Activated CD8-positive, alpha-beta memory T cell treated with anti-CD3 and anti-CD28 coated beads, Interleukin-2, amount 10 ng/mL, durations not matched to agents 7 days and 5 days (primary cell): ENCODE measurements at regions of chr3 and their contacts with region 1.

Region 1: DNA sequence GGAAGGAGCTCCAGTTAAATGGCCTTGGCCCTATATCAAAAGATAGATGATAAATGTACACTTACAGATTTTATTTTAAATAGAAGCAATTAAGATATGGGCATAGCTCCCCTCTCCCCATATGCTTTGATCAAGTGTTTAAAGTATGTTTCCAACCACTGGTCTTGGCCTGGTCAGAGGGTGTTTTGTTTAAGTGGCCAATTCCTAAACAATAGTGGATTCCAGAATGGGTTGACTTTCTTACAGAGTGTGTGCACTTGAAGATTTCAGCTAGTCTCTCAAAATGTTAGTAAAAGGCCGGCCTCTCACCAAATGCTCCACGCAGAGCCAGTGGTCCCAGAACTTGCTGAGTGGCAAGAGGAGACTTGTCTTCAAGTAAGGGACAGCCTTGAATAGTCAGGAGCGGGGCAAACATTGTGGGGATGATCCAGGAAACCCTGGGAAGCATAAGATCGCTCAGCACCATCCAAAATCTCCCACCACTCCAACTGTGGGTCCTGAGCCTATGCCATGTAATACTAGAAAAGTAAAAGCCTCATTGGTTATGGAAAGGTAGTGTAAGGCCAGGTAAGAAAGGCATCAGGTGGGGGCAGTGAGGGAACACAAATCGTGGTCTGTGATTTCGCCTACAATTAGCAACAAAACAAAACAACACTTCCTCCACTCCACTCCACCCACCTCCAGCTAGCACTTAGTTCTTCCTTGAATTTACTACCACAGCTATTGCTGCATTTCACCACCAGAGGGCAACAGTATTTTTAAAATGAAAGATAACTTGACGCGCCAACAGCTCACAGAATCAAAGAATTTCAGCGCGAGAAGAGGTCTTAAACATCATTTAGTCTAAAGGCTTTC is 4.8 kb downstream of the RARRES1 start:
- DNase-seq: peak; percentile 65
- ATAC-seq: peak; percentile 62
- H3K4me3 Mint-ChIP-seq: no peak overlapping the region
- H3K27ac Mint-ChIP-seq: no peak overlapping the region
- H3K4me1 Mint-ChIP-seq: peaks cover 20% of the 10 kb centered on the region
- H3K27me3 Mint-ChIP-seq: peaks cover 2% of the 10 kb centered on the region

Region 2: DNA sequence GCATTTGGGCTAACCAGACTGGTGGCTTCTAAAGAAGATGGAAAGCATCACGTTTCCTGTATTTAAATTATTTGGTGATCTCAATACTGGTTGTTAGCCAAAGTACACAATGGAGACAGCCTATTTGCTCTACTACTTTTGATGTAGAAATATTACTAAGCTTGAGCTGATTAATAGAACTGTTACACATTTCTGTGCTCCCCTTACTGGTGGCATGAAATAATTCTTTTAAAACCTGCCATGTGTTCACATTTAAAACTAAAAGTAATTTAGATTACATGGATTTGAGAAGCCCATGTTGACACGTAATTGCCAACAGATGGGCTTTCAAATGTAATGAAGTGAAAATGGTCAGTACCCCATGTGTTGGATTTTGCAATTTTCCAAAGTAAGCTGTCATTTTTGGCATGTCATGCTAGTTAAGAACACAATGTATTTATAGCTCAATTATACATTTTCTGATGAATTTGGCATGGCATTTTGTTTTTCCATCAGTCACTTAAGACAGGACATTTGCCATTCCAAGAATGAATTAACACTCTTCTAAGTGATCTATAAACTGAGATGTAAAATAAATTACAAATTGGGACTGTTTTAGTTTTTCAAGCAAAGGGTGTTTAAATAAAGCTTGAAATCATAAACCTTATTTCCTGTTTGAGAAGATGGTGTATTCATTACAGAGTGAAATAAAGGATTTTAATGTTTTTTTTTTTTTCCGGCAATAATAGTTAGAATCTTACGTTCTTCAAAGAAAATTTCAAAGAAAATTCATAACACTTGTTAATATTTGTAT is 15.6 kb after region 1 on chr3:
- CTCF ChIA-PET with region 1: interaction called, 15 read pairs
- DNase-seq: no peak
- ATAC-seq: no peak
- H3K4me3 Mint-ChIP-seq: no peak overlapping the region
- H3K27ac Mint-ChIP-seq: no peak overlapping the region
- H3K4me1 Mint-ChIP-seq: peaks cover 11% of the 10 kb centered on the region
- H3K27me3 Mint-ChIP-seq: no peaks in the 10 kb centered on the region

Region 3: GRCh38 chr3:158790901-158791589 is 63.6 kb after region 1 on chr3:
- CTCF ChIA-PET with region 1: interaction called, 101 read pairs
- DNase-seq: peak; percentile 50
- ATAC-seq: peak; percentile 72
- H3K4me3 Mint-ChIP-seq: peak overlapping the region; percentile 47
- H3K27ac Mint-ChIP-seq: no peak overlapping the region
- H3K4me1 Mint-ChIP-seq: peaks cover 9% of the 10 kb centered on the region
- H3K27me3 Mint-ChIP-seq: peaks cover 5% of the 10 kb centered on the region

Region 4: GRCh38 chr3:158801696-158802408 is 74.4 kb after region 1 on chr3 and contains the start of gene MFSD1:
- CTCF ChIA-PET with region 1: interaction called, 30 read pairs
- DNase-seq: peak; percentile 96
- ATAC-seq: peak; percentile 95
- H3K4me3 Mint-ChIP-seq: peak within 1 kb of the TSS; percentile 84
- H3K27ac Mint-ChIP-seq: peak within 1 kb of the TSS; percentile 83
- H3K4me1 Mint-ChIP-seq: peaks cover 22% of the 10 kb centered on the region
- H3K27me3 Mint-ChIP-seq: peaks cover 4% of the 10 kb centered on the region
- total RNA-seq, gene MFSD1: 19.4 to 20.6 TPM